ENCODE measurements at regions of chr1 and their contacts with region 1.

Region 1: GRCh38 chr1:240189386-240189989 is 97.8 kb downstream of the FMN2 start:
- H3K4me3 ChIP-seq: no peak overlapping the region
- H3K27ac ChIP-seq: no peak overlapping the region
- H3K4me1 ChIP-seq: peaks cover 4% of the 10 kb centered on the region; the same call in 1 of the 2 replicates
- CTCF ChIP-seq: peak; percentile 61

Region 2: DNA sequence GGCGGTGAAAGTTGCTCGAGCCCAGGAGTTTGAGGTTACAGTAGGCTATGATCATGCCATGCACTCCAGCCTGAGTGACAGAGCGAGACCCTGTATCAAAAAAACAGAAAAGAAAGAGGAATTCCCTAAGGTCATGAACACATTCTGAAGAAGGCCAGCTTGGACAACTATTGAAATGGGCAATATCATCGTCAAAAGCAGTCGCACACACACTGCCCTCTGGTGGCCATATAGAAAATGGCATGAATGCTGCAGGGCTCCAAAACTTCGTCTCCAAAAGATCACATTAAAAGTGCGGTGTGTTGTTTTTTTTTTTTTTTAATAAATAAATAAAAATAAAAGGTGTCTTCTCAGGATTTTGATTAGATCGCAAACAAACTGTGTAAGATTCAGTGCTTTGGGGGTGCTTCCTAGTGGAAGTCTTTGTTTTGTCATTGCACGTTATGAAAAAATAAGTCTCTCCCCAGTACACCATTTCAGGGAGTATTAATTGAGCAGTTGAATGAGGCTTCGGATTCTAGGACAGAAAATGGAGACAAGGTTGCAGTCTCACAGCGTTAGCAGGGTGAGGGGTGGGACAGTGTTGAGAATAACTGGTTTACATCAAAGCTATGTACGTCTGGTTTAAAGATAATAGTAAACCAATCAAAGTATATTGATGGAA is 185.3 kb before region 1 on chr1:
- CTCF ChIA-PET with region 1: interaction called, 15 read pairs
- POLR2A ChIA-PET with region 1: no interaction called
- H3K4me3 ChIP-seq: no peak overlapping the region
- H3K27ac ChIP-seq: no peak overlapping the region
- H3K4me1 ChIP-seq: peaks cover 6% of the 10 kb centered on the region
- CTCF ChIP-seq: 0 out of 2 replicates have a peak, but pooled peaks have one; percentile 60

Region 3: DNA sequence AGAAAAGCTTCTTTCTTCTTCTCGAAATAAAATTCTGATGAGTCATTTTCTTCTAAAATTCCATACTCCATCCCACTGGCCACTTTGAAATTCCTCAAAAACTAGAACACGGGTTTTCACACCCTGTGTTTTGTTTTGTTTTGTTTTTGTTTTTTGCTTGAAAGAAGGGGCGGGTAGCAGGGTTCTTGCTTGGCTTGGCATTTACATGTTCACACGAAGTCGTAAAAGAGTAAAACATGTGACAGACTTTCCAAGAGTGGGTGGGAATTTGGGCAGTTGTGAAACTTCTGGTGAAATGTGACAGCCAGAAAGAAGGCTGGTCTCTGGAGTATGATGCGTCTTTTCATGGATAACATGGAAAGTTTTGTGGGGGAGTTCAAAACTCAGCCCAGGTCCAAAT is 144.9 kb before region 1 on chr1:
- CTCF ChIA-PET with region 1: interaction called, 12 read pairs
- POLR2A ChIA-PET with region 1: no interaction called
- H3K4me3 ChIP-seq: no peak overlapping the region
- H3K27ac ChIP-seq: no peak overlapping the region
- H3K4me1 ChIP-seq: no peaks in the 10 kb centered on the region
- CTCF ChIP-seq: no peak

Region 4: GRCh38 chr1:240199758-240200645 is 10.5 kb after region 1 on chr1:
- CTCF ChIA-PET with region 1: interaction called, 19 read pairs
- POLR2A ChIA-PET with region 1: no interaction called
- H3K4me3 ChIP-seq: no peak overlapping the region
- H3K27ac ChIP-seq: no peak overlapping the region
- H3K4me1 ChIP-seq: no peaks in the 10 kb centered on the region
- CTCF ChIP-seq: no peak

Region 5: DNA sequence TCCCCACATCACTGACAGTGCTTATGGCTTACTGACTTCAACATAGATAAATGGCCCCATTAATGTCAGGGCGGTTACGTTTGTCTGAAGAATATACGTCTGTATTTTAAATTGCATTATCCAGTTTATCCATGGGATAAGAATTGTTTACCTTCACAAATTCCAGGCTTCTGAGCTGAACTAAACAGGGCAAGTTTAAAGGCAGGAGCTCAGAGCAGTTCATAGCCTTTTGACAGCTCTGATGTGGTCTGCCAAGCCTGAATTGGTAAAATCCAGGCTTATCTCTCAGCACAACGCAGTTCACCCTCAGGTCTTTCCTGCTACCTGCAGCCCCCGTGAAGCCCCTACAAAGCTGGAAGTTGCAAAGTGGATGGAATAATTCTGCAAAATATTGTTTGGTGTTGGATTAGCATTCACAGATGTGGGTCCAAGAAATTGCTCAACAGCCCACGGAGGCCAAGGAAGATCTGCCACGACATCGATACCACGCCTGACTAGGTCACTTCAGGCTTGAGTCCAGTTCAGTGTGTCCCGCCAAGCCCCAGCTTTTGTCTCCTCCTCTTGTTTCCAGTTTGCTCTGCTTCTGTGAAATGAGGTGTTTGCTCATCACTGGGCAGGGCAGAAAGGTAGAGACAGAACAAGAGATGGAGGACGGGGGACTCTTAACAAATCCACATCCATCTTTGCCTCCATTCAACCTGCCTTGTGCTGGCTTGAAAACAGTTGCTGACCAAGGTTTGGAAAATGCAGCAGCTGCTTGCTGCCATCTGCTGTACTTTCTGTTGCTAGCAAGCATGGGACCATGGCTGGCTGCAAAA is 502.2 kb after region 1 on chr1:
- CTCF ChIA-PET with region 1: interaction called, 35 read pairs
- POLR2A ChIA-PET with region 1: no interaction called
- H3K4me3 ChIP-seq: no peak overlapping the region
- H3K27ac ChIP-seq: no peak overlapping the region
- H3K4me1 ChIP-seq: no peaks in the 10 kb centered on the region
- CTCF ChIP-seq: peak; percentile 97

Measured in HEK293 (cell line).